Gastrocnemius medialis (tissue), 4 donors: ENCODE measurements at regions of chr12 and their contacts with region 1.

Region 1: DNA sequence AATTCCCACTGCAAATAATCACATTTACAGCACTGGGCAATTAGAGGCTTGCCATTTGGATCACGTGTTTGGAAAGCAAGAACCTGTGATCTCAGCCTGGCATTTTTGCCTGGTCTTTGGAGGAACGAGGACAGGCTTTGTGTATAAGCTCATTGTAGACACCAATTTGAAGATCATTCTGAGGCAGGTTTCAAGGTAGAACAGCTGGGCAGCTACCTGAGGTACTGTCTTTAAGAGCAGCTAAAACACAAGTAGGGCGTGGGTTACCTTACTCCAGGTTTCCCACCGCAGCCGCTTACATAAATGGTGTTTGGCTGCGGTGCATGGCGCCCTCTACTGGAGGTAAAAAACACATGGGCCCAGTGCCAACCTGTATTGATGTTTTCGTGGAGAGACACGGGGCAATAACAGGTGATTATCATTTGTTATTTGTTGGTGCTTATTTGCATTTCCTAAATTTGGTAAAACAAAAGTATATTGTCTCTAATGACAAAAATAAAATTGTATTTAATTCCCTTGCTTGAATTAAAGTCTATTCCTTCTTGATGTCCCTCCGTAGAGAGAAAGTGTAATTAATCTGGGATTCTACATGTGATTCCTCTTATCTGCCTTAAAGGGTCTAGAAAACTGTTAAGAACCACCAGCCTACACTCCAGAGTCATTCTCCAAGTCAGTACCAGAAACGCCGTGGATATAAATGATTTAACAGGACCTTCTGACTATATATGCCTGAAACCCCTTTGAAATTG is 69.7 kb downstream of the SVOP start:
- DNase-seq: peak; percentile 34 to 61
- ATAC-seq: peak; percentile 77 to 93
- H3K4me3 ChIP-seq: no peak overlapping the region
- H3K27ac ChIP-seq: no peak overlapping the region
- H3K4me1 ChIP-seq: peaks cover 4 to 8% of the 10 kb centered on the region in 2 donors
- H3K27me3 ChIP-seq: no peaks in the 10 kb centered on the region
- CTCF ChIP-seq: peak; percentile 84 to 92 (median 88)
- POLR2A ChIP-seq: no peak

Region 2: DNA sequence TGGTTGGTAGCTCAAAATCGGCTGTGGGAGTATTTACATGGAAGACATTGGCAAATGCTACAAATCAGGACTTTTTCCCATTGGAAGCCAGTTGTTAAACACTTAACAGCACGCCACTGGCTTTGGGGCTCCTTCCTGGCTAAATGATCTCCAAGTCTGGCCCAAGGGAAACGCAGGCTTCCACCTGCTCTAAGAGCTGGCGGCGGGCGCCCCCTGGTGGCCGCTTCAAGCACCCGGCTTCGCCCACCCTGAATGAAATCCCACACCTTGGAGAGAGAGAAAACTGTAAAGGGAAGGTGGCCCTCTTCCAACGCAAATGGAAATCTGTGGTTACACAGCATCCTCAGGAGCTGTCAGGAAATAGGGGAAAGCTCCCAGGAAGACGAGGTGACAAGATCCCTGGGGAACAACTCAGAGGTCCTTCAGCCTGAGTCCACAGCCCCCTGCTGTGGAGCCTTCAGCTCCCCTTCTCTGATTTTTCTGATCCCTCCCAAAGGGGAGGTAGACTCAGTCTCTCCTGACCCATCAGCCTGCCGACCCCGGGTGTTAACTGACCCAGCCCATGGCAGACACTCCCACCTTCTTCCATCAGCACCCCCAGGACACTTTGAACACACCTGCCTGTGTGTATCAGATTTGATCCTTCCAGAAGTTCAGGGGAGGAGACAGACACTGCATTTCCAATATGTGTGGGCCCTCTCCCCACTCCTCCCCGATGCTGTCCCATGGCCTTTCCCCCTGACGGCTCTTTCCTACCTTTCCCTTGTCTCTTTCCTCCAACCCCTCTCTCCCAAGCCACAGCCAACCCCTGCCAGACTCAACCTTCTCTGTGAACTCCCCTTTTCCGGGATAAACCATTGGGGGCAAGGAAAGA is 332.8 kb before region 1 on chr12:
- in situ Hi-C with region 1: no loop called
- intact Hi-C with region 1: loop called (anchors 5 kb)
- DNase-seq: peak; percentile 58 to 69
- ATAC-seq: peak; percentile 81 to 88
- H3K4me3 ChIP-seq: no peak overlapping the region
- H3K27ac ChIP-seq: no peak overlapping the region
- H3K4me1 ChIP-seq: no peaks in the 10 kb centered on the region
- H3K27me3 ChIP-seq: no peaks in the 10 kb centered on the region
- CTCF ChIP-seq: peak; percentile 87 to 98 (median 95)
- POLR2A ChIP-seq: no peak

Region 3: GRCh38 chr12:108664338-108665258 is 286.6 kb before region 1 on chr12:
- in situ Hi-C with region 1: no loop called
- intact Hi-C with region 1: loop called (anchors 5 kb)
- DNase-seq: peak; percentile 84 to 92
- ATAC-seq: peak; percentile 86 to 97
- H3K4me3 ChIP-seq: peak overlapping the region in 1 of 4 donors; percentile 12
- H3K27ac ChIP-seq: peak overlapping the region; percentile 79 to 84 (median 84)
- H3K4me1 ChIP-seq: peaks cover 51 to 57% of the 10 kb centered on the region in 2 donors
- H3K27me3 ChIP-seq: no peaks in the 10 kb centered on the region
- CTCF ChIP-seq: peak; percentile 93 to 98 (median 95)
- POLR2A ChIP-seq: no peak

Region 4: GRCh38 chr12:108773798-108774788 is 177.1 kb before region 1 on chr12:
- in situ Hi-C with region 1: loop called in 2 of 4 experiments (anchors 25 kb)
- intact Hi-C with region 1: no loop called
- DNase-seq: peak; percentile 88 to 94
- ATAC-seq: peak; percentile 86 to 90
- H3K4me3 ChIP-seq: no peak overlapping the region
- H3K27ac ChIP-seq: peak overlapping the region; percentile 80 to 86 (median 84)
- H3K4me1 ChIP-seq: peaks cover 36 to 45% of the 10 kb centered on the region in 2 donors
- H3K27me3 ChIP-seq: no peaks in the 10 kb centered on the region
- CTCF ChIP-seq: no peak
- POLR2A ChIP-seq: peak; percentile 8 to 27

Region 5: DNA sequence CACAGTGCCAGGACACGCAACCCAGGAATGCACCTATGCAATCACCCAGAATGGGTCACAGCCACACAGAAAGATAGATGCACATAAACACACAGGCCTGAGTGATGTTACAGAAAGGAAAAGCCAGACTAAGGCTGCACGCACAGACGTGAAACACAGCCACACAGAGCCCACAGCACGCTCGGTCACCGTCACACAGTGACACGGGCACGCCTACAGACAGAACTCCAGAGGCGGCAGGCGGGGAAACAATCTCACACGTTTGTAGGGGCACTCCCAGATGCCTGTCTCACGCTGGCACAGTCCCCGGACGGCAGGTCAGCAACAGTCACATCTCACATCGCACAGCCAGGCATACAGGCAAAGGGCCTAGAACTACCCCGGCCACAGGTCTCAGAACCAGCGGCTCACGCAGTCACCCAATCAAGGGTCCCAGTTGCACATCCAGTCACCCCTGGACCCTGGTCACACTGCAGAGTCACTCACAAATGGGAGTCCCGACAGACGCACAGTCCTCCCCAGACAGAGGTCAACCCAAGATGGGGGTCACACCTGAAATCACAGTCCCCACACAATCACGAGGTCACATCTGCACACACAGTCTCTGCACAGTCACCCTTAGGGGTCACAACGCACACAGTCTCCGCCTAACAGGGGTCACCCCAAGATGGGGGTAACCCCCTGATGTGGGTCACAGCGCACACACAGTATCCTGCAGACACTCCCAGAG is 94.6 kb before region 1 on chr12:
- in situ Hi-C with region 1: loop called in 1 of 4 experiments (anchors 10 kb)
- intact Hi-C with region 1: loop called (anchors 5 kb)
- DNase-seq: peak; percentile 70 to 91
- ATAC-seq: peak; percentile 28 to 39
- H3K4me3 ChIP-seq: peak overlapping the region; percentile 64 to 97 (median 86)
- H3K27ac ChIP-seq: peak overlapping the region; percentile 90 to 98 (median 96)
- H3K4me1 ChIP-seq: peaks cover 52 to 61% of the 10 kb centered on the region in 2 donors
- H3K27me3 ChIP-seq: no peaks in the 10 kb centered on the region
- CTCF ChIP-seq: no peak
- POLR2A ChIP-seq: peak; percentile 48 to 58

Region 6: GRCh38 chr12:109093022-109093918 is 142.1 kb after region 1 on chr12 and contains the start of gene ALKBH2:
- in situ Hi-C with region 1: no loop called
- intact Hi-C with region 1: loop called (anchors 5 kb)
- DNase-seq: peak; percentile 89 to 92
- ATAC-seq: peak; percentile 69 to 72
- H3K4me3 ChIP-seq: peak within 1 kb of the TSS; percentile 61 to 93 (median 64)
- H3K27ac ChIP-seq: peak within 1 kb of the TSS; percentile 79 to 88 (median 81)
- H3K4me1 ChIP-seq: peaks cover 22 to 23% of the 10 kb centered on the region in 2 donors
- H3K27me3 ChIP-seq: no peaks in the 10 kb centered on the region
- CTCF ChIP-seq: peak; percentile 93 to 99 (median 97)
- POLR2A ChIP-seq: peak; percentile 52 to 77
- total RNA-seq, gene ALKBH2: 8.7 to 22.5 (median 18.2) TPM